Mammary epithelial cell (primary cell): ENCODE measurements at regions of chr5 and their contacts with region 1.

Region 1: DNA sequence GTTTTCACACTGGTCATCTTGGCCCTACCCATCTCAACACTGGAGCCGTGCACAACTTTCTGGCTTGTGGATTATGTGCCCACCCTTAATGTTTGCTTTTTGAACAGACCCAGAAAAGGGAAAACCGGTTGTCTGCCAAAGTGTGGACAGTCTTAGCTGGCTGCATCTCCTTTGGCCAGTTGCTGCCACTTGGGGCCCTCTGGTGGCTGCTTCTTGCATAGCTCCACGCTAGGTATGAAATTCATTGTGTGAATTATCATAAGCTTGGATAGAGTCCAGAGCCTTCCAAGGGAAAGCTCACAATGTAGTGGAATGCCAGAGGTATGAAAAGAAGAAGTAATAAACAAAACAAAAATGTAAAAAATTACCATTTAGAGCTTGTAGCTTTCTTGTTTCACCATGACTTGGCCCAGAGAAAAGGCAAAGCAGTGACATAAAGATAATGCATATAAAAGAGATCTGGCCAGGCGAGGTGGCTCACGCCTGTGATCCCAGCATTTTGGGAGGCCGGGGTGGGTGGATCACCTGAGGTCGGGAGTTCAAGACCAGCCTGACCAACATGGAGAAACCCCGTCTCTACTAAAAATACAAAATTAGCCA is 12.5 kb upstream of the SLC36A3 start:
- DNase-seq: peak; percentile 55
- H3K4me3 ChIP-seq: no peak overlapping the region
- H3K27ac ChIP-seq: no peak overlapping the region
- H3K4me1 ChIP-seq: no peaks in the 10 kb centered on the region
- H3K27me3 ChIP-seq: no peaks in the 10 kb centered on the region
- CTCF ChIP-seq: peak; percentile 96 to 98

Region 2: GRCh38 chr5:151002250-151002649 is 313.8 kb before region 1 on chr5:
- CTCF ChIA-PET with region 1: interaction called, 20 read pairs
- dilution Hi-C with region 1: no loop called
- in situ Hi-C with region 1: no loop called
- intact Hi-C with region 1: loop called (anchors 2 kb)
- DNase-seq: peak; percentile 36
- H3K4me3 ChIP-seq: no peak overlapping the region
- H3K27ac ChIP-seq: no peak overlapping the region
- H3K4me1 ChIP-seq: no peaks in the 10 kb centered on the region
- H3K27me3 ChIP-seq: no peaks in the 10 kb centered on the region
- CTCF ChIP-seq: peak; percentile 29 to 63

Region 3: GRCh38 chr5:151164686-151165392 is 151.3 kb before region 1 on chr5:
- CTCF ChIA-PET with region 1: no interaction called
- dilution Hi-C with region 1: no loop called
- in situ Hi-C with region 1: no loop called
- intact Hi-C with region 1: loop called (anchors 2 kb)
- DNase-seq: peak; percentile 60
- H3K4me3 ChIP-seq: no peak overlapping the region
- H3K27ac ChIP-seq: no peak overlapping the region
- H3K4me1 ChIP-seq: no peaks in the 10 kb centered on the region
- H3K27me3 ChIP-seq: peaks cover 3% of the 10 kb centered on the region
- CTCF ChIP-seq: peak; percentile 96

Region 4: DNA sequence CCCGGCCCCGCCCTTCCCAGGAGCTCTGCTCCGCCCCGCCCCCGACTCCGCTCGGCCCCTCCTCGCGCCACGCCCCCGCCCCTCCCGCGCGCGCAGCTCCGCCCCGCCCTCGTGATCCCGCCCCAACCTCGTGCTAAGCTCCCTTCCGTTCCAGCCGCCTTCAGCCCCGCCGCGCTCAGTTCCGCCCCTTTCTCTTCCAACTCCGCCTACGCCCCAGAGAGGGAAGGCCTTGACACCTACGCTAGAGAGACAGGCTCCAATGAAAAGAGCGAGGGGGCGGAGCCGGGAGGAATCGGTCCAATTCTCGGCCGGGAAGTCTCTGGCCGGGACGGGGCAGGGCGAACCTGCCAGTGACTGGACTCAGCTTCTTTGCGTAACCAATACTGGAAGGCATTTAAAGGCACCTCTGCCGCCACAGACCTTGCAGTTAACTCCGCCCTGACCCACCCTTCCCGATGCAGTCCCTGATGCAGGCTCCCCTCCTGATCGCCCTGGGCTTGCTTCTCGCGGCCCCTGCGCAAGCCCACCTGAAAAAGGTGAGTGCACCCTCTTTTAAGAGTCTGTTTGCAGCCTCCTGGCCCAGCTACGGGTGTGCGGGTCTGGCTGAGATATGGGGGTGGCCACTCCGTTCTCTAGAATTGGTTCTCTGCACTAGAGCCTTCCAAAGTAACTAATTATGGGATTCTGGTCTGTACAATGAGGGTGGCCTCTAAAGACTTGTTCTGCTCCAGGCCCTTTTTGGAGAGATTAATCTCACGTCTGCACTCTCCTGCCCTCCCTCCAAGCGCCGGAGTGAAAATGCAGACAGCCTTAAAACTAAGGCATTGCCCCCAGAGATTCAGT is 63.1 kb before region 1 on chr5 and contains the start of gene GM2A:
- CTCF ChIA-PET with region 1: interaction called, 6 read pairs
- dilution Hi-C with region 1: no loop called
- in situ Hi-C with region 1: no loop called
- intact Hi-C with region 1: loop called (anchors 2 kb)
- DNase-seq: peak; percentile 100
- H3K4me3 ChIP-seq: peak within 1 kb of the TSS; percentile 64 to 92 (median 76)
- H3K27ac ChIP-seq: peak within 1 kb of the TSS; percentile 70
- H3K4me1 ChIP-seq: peaks cover 24% of the 10 kb centered on the region
- H3K27me3 ChIP-seq: no peaks in the 10 kb centered on the region
- CTCF ChIP-seq: no peak
- total RNA-seq, gene GM2A: 114 to 138 TPM

Region 5: GRCh38 chr5:151499501-151500035 is 183.5 kb after region 1 on chr5:
- CTCF ChIA-PET with region 1: interaction called, 11 read pairs
- dilution Hi-C with region 1: no loop called
- in situ Hi-C with region 1: no loop called
- intact Hi-C with region 1: loop called (anchors 2 kb)
- DNase-seq: no peak
- H3K4me3 ChIP-seq: no peak overlapping the region
- H3K27ac ChIP-seq: no peak overlapping the region
- H3K4me1 ChIP-seq: no peaks in the 10 kb centered on the region
- H3K27me3 ChIP-seq: no peaks in the 10 kb centered on the region
- CTCF ChIP-seq: no peak

Region 6: DNA sequence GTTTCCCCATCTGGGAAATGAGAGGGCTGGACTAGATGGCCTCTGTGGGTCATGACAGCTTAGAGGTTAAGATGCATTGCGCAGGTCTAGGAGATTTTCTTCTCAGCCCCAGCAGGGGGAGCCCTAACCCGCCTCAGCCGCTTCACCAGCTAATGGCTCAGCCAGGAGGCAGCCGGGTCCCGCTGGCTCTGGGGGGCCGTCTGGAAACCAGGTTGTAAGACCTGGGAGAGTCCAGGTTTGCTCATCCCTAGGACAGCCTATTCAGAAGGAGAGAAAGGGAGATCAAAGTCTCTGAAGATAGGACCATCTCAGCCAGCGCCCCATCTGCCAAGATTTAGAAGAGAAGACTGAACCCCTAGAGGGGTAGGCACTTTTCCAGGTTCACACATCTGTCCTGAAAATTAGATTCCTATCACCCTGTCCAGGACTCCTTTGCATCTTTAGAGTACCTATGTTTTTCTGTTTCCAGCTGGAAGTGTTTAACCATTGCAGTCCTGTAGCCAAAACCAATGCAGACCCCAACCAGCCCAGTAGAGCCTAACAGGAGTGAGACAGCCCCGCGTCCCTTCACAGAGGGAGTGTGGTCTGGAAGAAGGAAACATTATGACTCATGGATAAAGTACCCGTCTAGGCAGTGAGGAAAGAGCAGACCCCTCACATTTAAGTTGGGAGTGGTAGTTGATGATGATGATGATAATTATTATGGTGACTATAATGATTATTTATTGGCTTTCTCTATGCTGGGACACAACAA is 343.1 kb after region 1 on chr5:
- CTCF ChIA-PET with region 1: no interaction called
- dilution Hi-C with region 1: no loop called
- in situ Hi-C with region 1: no loop called
- intact Hi-C with region 1: no loop called
- DNase-seq: peak; percentile 57
- H3K4me3 ChIP-seq: no peak overlapping the region
- H3K27ac ChIP-seq: no peak overlapping the region
- H3K4me1 ChIP-seq: peaks cover 7% of the 10 kb centered on the region
- H3K27me3 ChIP-seq: no peaks in the 10 kb centered on the region
- CTCF ChIP-seq: peak; percentile 71 to 89